H1 (cell line): ENCODE measurements at regions of chr1 and their contacts with region 1.

Region 1: GRCh38 chr1:205977402-205978014 is 25.7 kb downstream of the RAB7B start:
- DNase-seq: peak; percentile 51 to 85
- H3K4me3 ChIP-seq: no peak overlapping the region
- H3K27ac ChIP-seq: no peak overlapping the region
- H3K4me1 ChIP-seq: no peaks in the 10 kb centered on the region; a peak in 2 of 7 replicates
- H3K27me3 ChIP-seq: no peaks in the 10 kb centered on the region; a peak in 1 of 7 replicates
- CTCF ChIP-seq: peak; percentile 93 to 98 (median 97)
- EP300 ChIP-seq: no peak
- POLR2A ChIP-seq: no peak
- RAD21 ChIP-seq: peak; percentile 99 to 100

Region 2: GRCh38 chr1:205783904-205784303 is 193.6 kb before region 1 on chr1:
- CTCF ChIA-PET with region 1: interaction called, 206 read pairs
- POLR2A ChIA-PET with region 1: no interaction called
- DNase-seq: no peak
- H3K4me3 ChIP-seq: no peak overlapping the region
- H3K27ac ChIP-seq: no peak overlapping the region
- H3K4me1 ChIP-seq: no peaks in the 10 kb centered on the region
- H3K27me3 ChIP-seq: no peaks in the 10 kb centered on the region
- CTCF ChIP-seq: no peak
- EP300 ChIP-seq: no peak
- POLR2A ChIP-seq: no peak
- RAD21 ChIP-seq: no peak

Region 3: GRCh38 chr1:205812878-205813754 is 164.4 kb before region 1 on chr1 and contains the start of gene SLC41A1:
- CTCF ChIA-PET with region 1: interaction called, 12 read pairs
- POLR2A ChIA-PET with region 1: interaction called, 3 read pairs
- DNase-seq: peak; percentile 74 to 94
- H3K4me3 ChIP-seq: peak within 1 kb of the TSS; percentile 49 to 94 (median 64)
- H3K27ac ChIP-seq: peak within 1 kb of the TSS; percentile 26; the same call in 1 of the 2 replicates
- H3K4me1 ChIP-seq: peaks cover 2 to 7% (median 6%) of the 10 kb centered on the region in 4 experiments; a peak in 5 of 7 replicates
- H3K27me3 ChIP-seq: peaks cover 0 to 3% (median 0%) of the 10 kb centered on the region in 4 experiments; a peak in 2 of 7 replicates
- CTCF ChIP-seq: no peak
- EP300 ChIP-seq: no peak
- POLR2A ChIP-seq: peak; percentile 50 to 92
- RAD21 ChIP-seq: no peak
- total RNA-seq, gene SLC41A1: 42.3 and 43.2 TPM in 2 replicates

Region 4: DNA sequence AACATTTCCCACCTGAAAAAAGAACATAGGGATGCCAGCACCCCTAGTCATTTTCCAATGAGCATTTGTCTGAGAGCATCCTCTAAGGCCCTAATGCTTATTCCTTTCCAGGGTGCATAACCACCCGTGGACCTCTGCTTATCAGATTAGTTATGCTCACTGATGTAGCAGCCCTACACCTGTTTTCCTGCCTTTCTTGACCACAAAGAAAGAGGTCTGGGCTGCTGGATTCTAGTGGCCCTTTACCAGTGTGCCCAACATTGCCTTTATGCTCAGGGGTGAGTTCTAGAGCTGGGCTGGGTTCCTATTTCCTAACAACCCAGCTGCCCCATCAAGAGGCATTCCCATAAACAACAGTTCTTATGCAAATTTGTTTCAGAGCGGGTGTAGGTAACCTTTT is 107.3 kb before region 1 on chr1:
- CTCF ChIA-PET with region 1: no interaction called
- POLR2A ChIA-PET with region 1: no interaction called
- DNase-seq: no peak
- H3K4me3 ChIP-seq: no peak overlapping the region
- H3K27ac ChIP-seq: no peak overlapping the region
- H3K4me1 ChIP-seq: no peaks in the 10 kb centered on the region
- H3K27me3 ChIP-seq: no peaks in the 10 kb centered on the region
- CTCF ChIP-seq: no peak
- EP300 ChIP-seq: no peak
- POLR2A ChIP-seq: no peak
- RAD21 ChIP-seq: no peak

Region 5: GRCh38 chr1:205907794-205908193 is 69.7 kb before region 1 on chr1:
- CTCF ChIA-PET with region 1: interaction called, 60 read pairs
- POLR2A ChIA-PET with region 1: no interaction called
- DNase-seq: no peak
- H3K4me3 ChIP-seq: no peak overlapping the region
- H3K27ac ChIP-seq: no peak overlapping the region
- H3K4me1 ChIP-seq: no peaks in the 10 kb centered on the region
- H3K27me3 ChIP-seq: no peaks in the 10 kb centered on the region
- CTCF ChIP-seq: peak; percentile 70 to 79 (median 71)
- EP300 ChIP-seq: no peak
- POLR2A ChIP-seq: no peak
- RAD21 ChIP-seq: peak; percentile 71 to 79

Region 6: DNA sequence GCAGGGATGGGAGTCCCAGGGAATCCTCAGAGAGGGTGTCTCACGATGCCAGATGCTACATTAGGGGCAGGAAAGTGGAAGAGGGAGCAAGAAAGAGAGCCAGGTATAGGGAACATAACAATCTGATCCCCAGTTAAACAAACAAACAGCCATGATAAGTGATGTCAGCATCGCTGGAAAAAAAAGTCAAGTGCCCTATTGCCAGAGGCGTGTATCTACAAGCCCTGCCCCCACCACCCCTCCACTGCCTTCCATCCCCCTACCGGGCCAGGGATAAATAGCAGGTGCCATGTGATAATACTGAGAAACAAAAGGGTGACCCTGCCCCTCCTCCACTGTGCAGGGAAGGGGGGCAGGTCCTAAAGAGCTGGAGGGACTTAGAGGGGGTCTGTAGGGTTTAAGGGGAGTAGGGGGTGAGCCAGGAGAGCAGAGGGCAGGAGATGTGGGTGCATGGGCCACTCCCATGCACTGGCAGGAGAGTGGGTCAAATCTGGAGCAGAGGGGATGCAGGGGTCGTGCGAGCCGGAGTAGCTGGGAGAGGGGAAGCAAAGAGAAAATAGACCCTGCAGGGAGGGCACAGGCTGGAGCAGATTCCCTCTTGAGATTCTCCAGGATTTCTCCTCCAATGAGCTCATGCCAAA is 37.7 kb before region 1 on chr1:
- CTCF ChIA-PET with region 1: interaction called, 40 read pairs
- POLR2A ChIA-PET with region 1: no interaction called
- DNase-seq: peak; percentile 44 to 81
- H3K4me3 ChIP-seq: no peak overlapping the region
- H3K27ac ChIP-seq: no peak overlapping the region
- H3K4me1 ChIP-seq: peaks cover 7 to 16% (median 14%) of the 10 kb centered on the region in 4 experiments
- H3K27me3 ChIP-seq: no peaks in the 10 kb centered on the region; a peak in 1 of 7 replicates
- CTCF ChIP-seq: peak; percentile 41 to 58 (median 50)
- EP300 ChIP-seq: no peak
- POLR2A ChIP-seq: no peak
- RAD21 ChIP-seq: peak in 1 of 2 experiments; percentile 23; a peak in 1 of 4 replicates

Region 7: DNA sequence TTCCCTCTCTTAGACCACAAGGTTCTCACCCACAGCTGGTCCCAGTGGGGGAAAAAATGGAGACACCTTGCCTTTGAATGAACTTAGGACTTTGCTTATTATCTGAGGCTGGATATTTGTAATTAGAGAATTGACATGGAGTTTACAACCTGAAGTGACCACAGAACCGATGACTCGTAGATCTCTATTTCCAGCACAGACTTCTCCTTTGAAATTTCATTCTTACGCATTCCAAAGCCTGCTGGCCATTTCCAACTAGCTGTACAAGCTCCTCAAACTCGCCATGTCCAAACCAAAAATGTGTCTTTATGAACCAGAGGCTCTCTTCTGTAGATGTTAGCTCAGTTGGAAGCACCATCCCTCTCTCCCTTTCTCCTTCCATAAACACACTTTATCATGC is 13.7 kb after region 1 on chr1:
- CTCF ChIA-PET with region 1: interaction called, 37 read pairs
- POLR2A ChIA-PET with region 1: no interaction called
- DNase-seq: no peak
- H3K4me3 ChIP-seq: no peak overlapping the region
- H3K27ac ChIP-seq: no peak overlapping the region
- H3K4me1 ChIP-seq: peaks cover 0 to 4% (median 2%) of the 10 kb centered on the region in 4 experiments; a peak in 3 of 7 replicates
- H3K27me3 ChIP-seq: no peaks in the 10 kb centered on the region; a peak in 1 of 7 replicates
- CTCF ChIP-seq: no peak
- EP300 ChIP-seq: no peak
- POLR2A ChIP-seq: no peak
- RAD21 ChIP-seq: no peak

Region 8: GRCh38 chr1:206081856-206082255 is 104.3 kb after region 1 on chr1:
- CTCF ChIA-PET with region 1: interaction called, 10 read pairs
- POLR2A ChIA-PET with region 1: no interaction called
- DNase-seq: no peak
- H3K4me3 ChIP-seq: no peak overlapping the region
- H3K27ac ChIP-seq: no peak overlapping the region
- H3K4me1 ChIP-seq: no peaks in the 10 kb centered on the region
- H3K27me3 ChIP-seq: no peaks in the 10 kb centered on the region
- CTCF ChIP-seq: no peak
- EP300 ChIP-seq: no peak
- POLR2A ChIP-seq: no peak
- RAD21 ChIP-seq: no peak

Region 9: GRCh38 chr1:206143537-206144172 is 166.1 kb after region 1 on chr1:
- CTCF ChIA-PET with region 1: no interaction called
- POLR2A ChIA-PET with region 1: no interaction called
- DNase-seq: no peak
- H3K4me3 ChIP-seq: no peak overlapping the region
- H3K27ac ChIP-seq: no peak overlapping the region
- H3K4me1 ChIP-seq: no peaks in the 10 kb centered on the region
- H3K27me3 ChIP-seq: no peaks in the 10 kb centered on the region
- CTCF ChIP-seq: no peak
- EP300 ChIP-seq: no peak
- POLR2A ChIP-seq: no peak
- RAD21 ChIP-seq: no peak